ENCODE measurements at regions of chr22 and their contacts with region 1.

Region 1: DNA sequence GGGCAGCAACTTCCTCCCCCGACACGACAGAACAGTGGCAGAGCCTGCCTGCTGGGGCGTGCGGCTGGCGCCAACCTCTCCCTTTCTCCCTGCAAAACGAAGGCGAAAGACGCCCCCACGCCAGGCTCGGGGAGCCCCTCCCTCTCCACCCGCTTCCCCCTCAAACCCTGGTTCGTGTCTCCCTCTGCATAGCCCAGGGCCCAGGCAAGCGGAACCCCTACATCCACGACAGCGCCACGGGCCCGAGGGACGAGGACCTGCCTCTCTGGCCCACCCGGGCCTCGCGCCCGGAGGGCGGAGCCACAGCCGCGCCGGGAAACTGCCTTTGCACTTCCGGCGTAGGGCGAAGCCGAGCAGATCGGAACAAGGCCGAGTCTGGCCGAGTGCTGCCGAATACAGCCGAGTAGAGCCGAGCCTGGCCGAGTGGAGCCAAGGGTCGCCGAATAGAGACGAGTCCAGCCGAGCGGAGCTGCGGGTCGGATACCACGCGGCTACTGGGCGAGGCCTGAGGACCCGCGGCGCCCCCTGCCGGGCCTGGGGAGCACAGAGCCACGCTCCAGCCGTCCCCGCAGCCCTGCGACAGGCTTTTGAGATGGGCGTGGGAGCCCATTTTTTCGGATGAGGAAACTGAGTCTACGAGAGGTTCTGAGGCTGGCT is 11.2 kb upstream of the C1QTNF6 start:
- DNase-seq: peak; percentile 86 to 97 (median 90)
- ATAC-seq: peak; percentile 98
- H3K4me3 ChIP-seq: peak overlapping the region; percentile 59
- H3K27ac ChIP-seq: peak overlapping the region; percentile 75
- H3K4me1 ChIP-seq: peaks cover 23 to 47% of the 10 kb centered on the region in 2 experiments
- H3K27me3 ChIP-seq: no peaks in the 10 kb centered on the region
- CTCF ChIP-seq: peak; percentile 81 to 88 (median 83)
- EP300 ChIP-seq: no peak
- POLR2A ChIP-seq: peak; percentile 96
- RAD21 ChIP-seq: peak; percentile 64 to 69

Region 2: DNA sequence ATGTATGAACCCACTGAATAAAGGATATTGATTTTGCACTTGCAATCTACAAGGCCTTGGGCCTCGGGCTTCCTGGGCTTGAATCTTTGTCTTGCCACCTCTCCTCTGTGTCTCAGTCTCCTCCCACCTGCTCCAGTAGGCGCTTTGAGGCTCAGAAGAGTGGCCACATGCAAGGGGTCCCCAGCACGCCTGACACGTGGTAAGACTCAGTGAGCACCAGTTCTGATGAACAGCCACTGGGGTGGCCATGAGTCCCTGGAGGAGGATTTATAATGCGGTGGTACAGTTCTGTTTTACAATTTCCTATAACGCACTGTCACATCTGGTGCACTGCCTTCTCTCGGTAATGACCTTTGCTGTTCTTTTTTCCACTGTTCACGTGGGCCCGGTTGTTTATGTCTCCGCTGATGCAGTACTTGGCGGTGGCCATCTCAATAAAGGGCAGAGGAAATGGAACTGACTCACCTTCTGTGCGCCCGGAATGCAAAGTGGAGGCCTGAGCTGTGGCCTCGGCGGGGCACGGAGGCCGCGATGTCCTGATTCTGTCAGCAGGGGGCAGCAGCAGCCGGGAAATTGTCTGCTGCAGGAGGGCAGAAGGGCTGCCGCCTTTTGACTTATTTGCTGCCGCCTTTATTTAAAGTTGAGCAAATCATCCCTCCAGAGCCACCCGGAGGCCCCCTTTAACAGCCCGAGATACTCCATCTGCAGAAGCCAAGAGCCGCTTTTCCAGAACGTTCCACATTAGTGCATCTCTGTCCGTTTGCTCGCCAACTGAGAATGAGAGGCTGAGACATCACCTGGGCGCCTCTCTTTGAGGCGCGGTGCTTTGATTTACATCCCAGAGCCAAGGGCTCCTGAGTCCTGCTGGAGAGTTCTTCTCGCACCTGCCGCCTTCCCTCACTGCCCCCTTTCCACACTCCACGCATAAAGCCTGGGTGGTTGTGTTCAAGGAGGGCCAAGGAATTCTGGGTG is 417.3 kb before region 1 on chr22:
- CTCF ChIA-PET with region 1: no interaction called
- POLR2A ChIA-PET with region 1: no interaction called
- in situ Hi-C with region 1: no loop called
- intact Hi-C with region 1: loop called (anchors 10 kb)
- DNase-seq: peak; percentile 64 to 77 (median 75)
- ATAC-seq: peak; percentile 90
- H3K4me3 ChIP-seq: no peak overlapping the region
- H3K27ac ChIP-seq: no peak overlapping the region
- H3K4me1 ChIP-seq: no peaks in the 10 kb centered on the region; a peak in 1 of 5 replicates
- H3K27me3 ChIP-seq: peaks cover under 1 to 41% of the 10 kb centered on the region in 2 experiments; a peak in 4 of 5 replicates
- CTCF ChIP-seq: peak; percentile 79 to 85 (median 81)
- EP300 ChIP-seq: no peak
- POLR2A ChIP-seq: no peak
- RAD21 ChIP-seq: peak; percentile 73 to 80

Region 3: GRCh38 chr22:37077884-37078485 is 121.2 kb before region 1 on chr22:
- CTCF ChIA-PET with region 1: interaction called, 12 read pairs
- POLR2A ChIA-PET with region 1: no interaction called
- in situ Hi-C with region 1: no loop called
- intact Hi-C with region 1: loop called (anchors 2 kb)
- DNase-seq: peak; percentile 61 to 89 (median 84)
- ATAC-seq: peak; percentile 90
- H3K4me3 ChIP-seq: no peak overlapping the region
- H3K27ac ChIP-seq: no peak overlapping the region
- H3K4me1 ChIP-seq: peaks cover 0 to 4% of the 10 kb centered on the region in 2 experiments; a peak in 1 of 5 replicates
- H3K27me3 ChIP-seq: peaks cover 0 to 52% of the 10 kb centered on the region in 2 experiments; a peak in 2 of 5 replicates
- CTCF ChIP-seq: peak; percentile 76 to 84 (median 81)
- EP300 ChIP-seq: no peak
- POLR2A ChIP-seq: no peak
- RAD21 ChIP-seq: peak; percentile 62 to 74

Region 4: GRCh38 chr22:37166675-37167066 is 32.6 kb before region 1 on chr22:
- CTCF ChIA-PET with region 1: interaction called, 27 read pairs
- POLR2A ChIA-PET with region 1: interaction called, 3 read pairs
- in situ Hi-C with region 1: no loop called
- intact Hi-C with region 1: loop called (anchors 1 kb)
- DNase-seq: peak; percentile 77 to 80 (median 78)
- ATAC-seq: peak; percentile 98
- H3K4me3 ChIP-seq: no peak overlapping the region
- H3K27ac ChIP-seq: no peak overlapping the region
- H3K4me1 ChIP-seq: peaks cover 0 to 13% of the 10 kb centered on the region in 2 experiments; a peak in 2 of 5 replicates
- H3K27me3 ChIP-seq: no peaks in the 10 kb centered on the region; a peak in 2 of 5 replicates
- CTCF ChIP-seq: peak; percentile 85 to 89 (median 85)
- EP300 ChIP-seq: no peak
- POLR2A ChIP-seq: no peak
- RAD21 ChIP-seq: peak; percentile 69 to 80

Region 5: GRCh38 chr22:37260901-37261336 is 61.7 kb after region 1 on chr22:
- CTCF ChIA-PET with region 1: interaction called, 3 read pairs
- POLR2A ChIA-PET with region 1: no interaction called
- in situ Hi-C with region 1: no loop called
- intact Hi-C with region 1: loop called (anchors 2 kb)
- DNase-seq: peak; percentile 66 to 73 (median 70)
- ATAC-seq: peak; percentile 80
- H3K4me3 ChIP-seq: no peak overlapping the region
- H3K27ac ChIP-seq: no peak overlapping the region
- H3K4me1 ChIP-seq: peaks cover 4 to 15% of the 10 kb centered on the region in 2 experiments; a peak in 4 of 5 replicates
- H3K27me3 ChIP-seq: no peaks in the 10 kb centered on the region; a peak in 2 of 5 replicates
- CTCF ChIP-seq: peak; percentile 78 to 87 (median 85)
- EP300 ChIP-seq: no peak
- POLR2A ChIP-seq: no peak
- RAD21 ChIP-seq: peak; percentile 25 to 70

Region 6: GRCh38 chr22:37741312-37741795 is 542.1 kb after region 1 on chr22:
- CTCF ChIA-PET with region 1: no interaction called
- POLR2A ChIA-PET with region 1: no interaction called
- in situ Hi-C with region 1: no loop called
- intact Hi-C with region 1: no loop called
- DNase-seq: no peak
- ATAC-seq: no peak; the same call in 2 of the 3 replicates
- H3K4me3 ChIP-seq: no peak overlapping the region
- H3K27ac ChIP-seq: no peak overlapping the region
- H3K4me1 ChIP-seq: peaks cover 4 to 27% of the 10 kb centered on the region in 2 experiments; a peak in 4 of 5 replicates
- H3K27me3 ChIP-seq: no peaks in the 10 kb centered on the region
- CTCF ChIP-seq: no peak
- EP300 ChIP-seq: no peak
- POLR2A ChIP-seq: no peak
- RAD21 ChIP-seq: no peak

Measured in K562 (cell line).